G401 (cell line): ENCODE measurements at regions of chr5 and their contacts with region 1.

Region 1: GRCh38 chr5:76920491-76920890 is 32.4 kb upstream of the CRHBP start:
- DNase-seq: no peak

Region 2: DNA sequence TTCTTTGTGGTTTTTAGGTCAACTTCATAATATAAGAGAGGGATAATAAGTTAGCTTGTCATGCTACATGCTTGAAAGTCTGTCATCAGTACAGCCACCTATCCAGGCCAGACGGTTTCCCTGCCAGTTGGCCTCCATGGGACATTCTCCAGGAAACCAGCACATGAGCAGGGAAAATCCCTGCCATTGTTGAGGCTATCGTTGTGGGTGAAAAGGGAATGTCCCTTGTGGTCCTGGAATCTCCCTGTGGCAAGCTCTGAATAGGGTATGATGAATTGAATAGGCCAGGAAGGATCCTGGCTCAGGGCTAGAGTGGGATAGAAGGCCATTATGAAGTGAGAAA is 89.4 kb before region 1 on chr5:
- in situ Hi-C with region 1: no loop called
- DNase-seq: no peak

Region 3: DNA sequence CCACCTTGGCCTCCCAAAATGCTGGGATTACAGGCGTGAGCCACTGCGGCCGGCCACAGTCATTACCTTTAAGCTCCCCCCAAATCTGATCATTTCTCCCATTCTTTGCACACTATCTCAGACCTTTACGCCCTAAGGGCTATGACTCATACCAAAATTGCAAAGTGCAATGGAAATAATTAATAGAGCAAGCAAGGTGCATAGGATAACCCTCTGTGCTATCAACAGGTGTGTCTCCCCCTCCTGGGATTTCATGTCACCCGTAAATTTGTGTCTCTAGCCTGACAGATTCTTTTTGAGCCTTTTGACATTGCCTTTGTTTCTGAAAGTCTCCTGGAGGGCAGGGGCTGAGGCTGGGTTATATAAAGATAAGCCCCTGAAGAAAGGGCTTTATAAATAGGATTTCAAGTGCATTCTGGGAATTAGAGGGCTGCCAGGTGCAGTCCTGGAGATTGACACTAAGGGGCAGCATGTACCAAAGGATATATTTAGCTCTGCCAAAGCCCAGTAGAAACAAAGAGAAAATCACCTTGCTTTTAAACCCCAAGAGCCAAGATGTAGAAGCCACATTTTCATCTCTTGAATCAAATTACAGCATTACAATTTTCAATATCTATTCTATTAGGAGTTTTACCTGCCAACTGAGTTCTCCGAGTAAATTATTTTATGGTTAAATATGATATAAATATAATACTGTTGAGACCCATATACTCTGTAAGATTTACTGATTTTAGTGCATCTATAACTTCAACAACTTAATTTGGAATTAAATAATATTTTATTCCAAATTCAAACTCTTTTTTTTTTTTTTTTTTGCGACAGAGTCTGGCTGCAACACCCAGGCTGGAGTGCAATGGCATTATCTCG is 52.4 kb before region 1 on chr5:
- in situ Hi-C with region 1: loop called (anchors 5 kb)
- DNase-seq: peak; percentile 40